Left ventricle myocardium inferior (tissue), 1 donor: ENCODE measurements at regions of chr7 and their contacts with region 1.

Region 1: DNA sequence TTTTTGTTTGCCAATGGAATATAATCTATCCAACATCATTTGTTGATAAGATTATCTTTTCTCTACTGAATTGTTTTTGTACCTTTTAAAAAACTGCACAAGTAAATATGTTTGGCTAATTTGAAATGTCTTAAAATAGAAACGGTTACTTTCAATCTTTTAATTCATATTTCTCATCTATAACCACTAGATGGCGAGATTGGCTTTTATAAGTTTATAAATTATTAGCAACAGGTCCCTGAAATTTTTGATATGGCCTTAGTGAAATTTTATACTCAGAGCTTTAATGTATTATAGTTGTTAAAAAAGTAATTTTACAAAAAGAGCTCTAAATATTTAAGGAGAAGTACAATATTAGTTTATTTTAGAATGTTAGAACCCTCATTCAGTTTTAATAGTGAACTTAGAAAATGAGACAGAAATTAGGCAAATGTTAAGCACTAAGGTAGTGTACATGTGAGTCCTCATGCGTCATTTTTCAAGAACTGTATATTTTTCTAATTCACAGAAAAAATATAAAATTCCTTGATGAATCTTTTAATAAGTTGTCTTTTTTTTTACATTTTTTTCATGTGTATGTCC is 592.5 kb downstream of the ARL4A start:
- DNase-seq: no peak
- H3K4me3 ChIP-seq: no peak overlapping the region
- H3K27ac ChIP-seq: no peak overlapping the region
- H3K4me1 ChIP-seq: no peaks in the 10 kb centered on the region
- H3K27me3 ChIP-seq: no peaks in the 10 kb centered on the region
- CTCF ChIP-seq: peak; percentile 62

Region 2: DNA sequence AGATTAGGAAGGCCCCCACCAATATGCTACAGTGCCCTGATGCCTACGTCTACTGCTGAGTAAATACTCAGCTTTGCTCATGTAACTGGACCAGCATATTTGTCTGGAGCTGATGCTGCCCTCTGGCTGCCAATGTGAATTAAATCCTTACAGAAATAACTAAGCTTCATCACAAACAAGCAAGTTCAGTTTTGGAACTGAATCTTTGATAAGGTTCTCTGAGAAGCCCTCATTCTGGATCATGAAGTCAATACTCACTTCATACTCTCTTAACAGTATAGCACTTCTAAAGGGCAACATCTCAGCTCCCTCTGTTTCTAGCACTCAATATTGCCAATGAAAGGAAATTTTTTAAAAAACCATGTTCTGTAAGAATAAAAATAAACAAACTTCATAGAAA is 462.9 kb after region 1 on chr7:
- intact Hi-C with region 1: loop called (anchors 5 kb)
- DNase-seq: no peak
- H3K4me3 ChIP-seq: no peak overlapping the region
- H3K27ac ChIP-seq: peak overlapping the region; percentile 14
- H3K4me1 ChIP-seq: peaks cover 14% of the 10 kb centered on the region
- H3K27me3 ChIP-seq: no peaks in the 10 kb centered on the region
- CTCF ChIP-seq: peak; percentile 64

Region 3: DNA sequence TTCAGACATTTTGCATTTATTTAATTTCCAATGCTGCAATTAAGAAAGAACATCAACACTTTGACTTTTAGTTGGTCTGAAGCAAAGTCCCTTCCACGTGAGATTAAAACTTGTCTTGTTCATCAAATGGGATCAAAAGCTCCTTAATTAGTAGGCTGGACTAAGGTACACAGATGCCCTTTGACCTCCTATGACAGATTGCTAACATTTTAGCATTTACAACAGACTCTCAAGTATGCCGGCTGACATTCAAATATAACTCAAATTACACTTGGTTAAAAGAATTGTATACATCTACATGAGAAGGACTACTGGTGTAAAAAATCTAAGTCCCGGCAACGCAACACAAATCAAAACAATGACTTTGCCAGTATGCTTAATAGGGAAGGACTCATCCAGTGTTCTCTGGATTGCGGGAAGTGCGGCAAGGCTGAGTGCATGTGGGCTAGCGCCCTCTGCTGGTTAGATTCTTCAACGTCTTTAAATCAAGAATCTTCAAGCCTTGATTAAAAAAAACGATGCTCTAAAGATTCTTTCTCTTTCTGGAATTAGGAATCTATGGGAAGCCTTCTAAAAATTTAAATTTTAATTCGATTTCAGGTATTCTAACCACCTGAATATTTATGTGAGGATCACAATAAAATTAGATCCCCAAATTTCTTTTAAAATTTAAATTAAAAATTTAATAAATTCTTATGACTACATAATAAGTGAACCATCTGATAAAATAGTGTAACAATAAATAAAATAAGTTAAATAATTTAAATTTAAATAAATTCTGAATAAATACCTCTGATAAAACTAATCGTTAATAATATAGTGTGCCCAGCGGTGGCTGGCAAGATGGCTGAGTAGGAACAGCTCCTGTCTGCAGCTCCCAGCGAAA is 1177.9 kb after region 1 on chr7:
- intact Hi-C with region 1: loop called (anchors 10 kb)
- DNase-seq: peak; percentile 48
- H3K4me3 ChIP-seq: peak overlapping the region; percentile 38
- H3K27ac ChIP-seq: no peak overlapping the region
- H3K4me1 ChIP-seq: peaks cover 9% of the 10 kb centered on the region
- H3K27me3 ChIP-seq: no peaks in the 10 kb centered on the region
- CTCF ChIP-seq: peak; percentile 91

Region 4: GRCh38 chr7:14691597-14692203 is 1411.8 kb after region 1 on chr7:
- intact Hi-C with region 1: loop called (anchors 2 kb)
- DNase-seq: peak; percentile 49
- H3K4me3 ChIP-seq: no peak overlapping the region
- H3K27ac ChIP-seq: no peak overlapping the region
- H3K4me1 ChIP-seq: no peaks in the 10 kb centered on the region
- H3K27me3 ChIP-seq: no peaks in the 10 kb centered on the region
- CTCF ChIP-seq: peak; percentile 85